MCF 10A (cell line): ENCODE measurements at regions of chr22 and their contacts with region 1.

Region 1: GRCh38 chr22:44023404-44024287 is 456 bp upstream of the PARVB start:
- DNase-seq: peak; percentile 8
- H3K4me3 Mint-ChIP-seq: peak overlapping the region; percentile 80
- H3K27ac Mint-ChIP-seq: peak overlapping the region; percentile 69
- H3K4me1 Mint-ChIP-seq: peaks cover 19% of the 10 kb centered on the region
- H3K27me3 Mint-ChIP-seq: no peaks in the 10 kb centered on the region
- CTCF ChIP-seq: no peak

Region 2: GRCh38 chr22:44037519-44038370 is 14.1 kb after region 1 on chr22:
- CTCF ChIA-PET with region 1: no interaction called
- POLR2A ChIA-PET with region 1: interaction called, 9 read pairs
- intact Hi-C with region 1: loop called (anchors 1 kb)
- DNase-seq: peak; percentile 91
- H3K4me3 Mint-ChIP-seq: peak overlapping the region; percentile 48
- H3K27ac Mint-ChIP-seq: peak overlapping the region; percentile 59
- H3K4me1 Mint-ChIP-seq: peaks cover 15% of the 10 kb centered on the region
- H3K27me3 Mint-ChIP-seq: no peaks in the 10 kb centered on the region
- CTCF ChIP-seq: no peak